ENCODE measurements at regions of chr6 and their contacts with region 1.

Region 1: GRCh38 chr6:41092421-41093140 is 19.8 kb downstream of the NFYA start:
- DNase-seq: no peak
- H3K4me3 ChIP-seq: no peak overlapping the region
- H3K27ac ChIP-seq: no peak overlapping the region
- H3K4me1 ChIP-seq: no peaks in the 10 kb centered on the region
- H3K27me3 ChIP-seq: no peaks in the 10 kb centered on the region
- CTCF ChIP-seq: no peak

Region 2: GRCh38 chr6:41155132-41155805 is 62.7 kb after region 1 on chr6:
- intact Hi-C with region 1: no loop called
- DNase-seq: no peak
- H3K4me3 ChIP-seq: no peak overlapping the region
- H3K27ac ChIP-seq: no peak overlapping the region
- H3K4me1 ChIP-seq: no peaks in the 10 kb centered on the region
- H3K27me3 ChIP-seq: no peaks in the 10 kb centered on the region
- CTCF ChIP-seq: no peak

Region 3: GRCh38 chr6:41318654-41319565 is 226.3 kb after region 1 on chr6:
- intact Hi-C with region 1: loop called (anchors 10 kb)
- DNase-seq: peak; percentile 75
- H3K4me3 ChIP-seq: peak overlapping the region; percentile 12
- H3K27ac ChIP-seq: no peak overlapping the region
- H3K4me1 ChIP-seq: peaks cover 8% of the 10 kb centered on the region
- H3K27me3 ChIP-seq: no peaks in the 10 kb centered on the region
- CTCF ChIP-seq: peak; percentile 100

Measured in colonic mucosa (tissue), 4 donors.